Heart left ventricle (tissue), 16 donors: ENCODE measurements at regions of chr9 and their contacts with region 1.

Region 1: GRCh38 chr9:13351778-13352386 is 72.4 kb upstream of the MPDZ start:
- DNase-seq: peak in 1 of 5 donors; percentile 24
- ATAC-seq: peak in 2 of 4 donors; percentile 46 to 47
- H3K4me3 ChIP-seq: no peak overlapping the region
- H3K27ac ChIP-seq: no peak overlapping the region
- H3K4me1 ChIP-seq: no peaks in the 10 kb centered on the region
- H3K27me3 ChIP-seq: no peaks in the 10 kb centered on the region
- CTCF ChIP-seq: peak; percentile 49 to 82 (median 68)
- POLR2A ChIP-seq: no peak

Region 2: DNA sequence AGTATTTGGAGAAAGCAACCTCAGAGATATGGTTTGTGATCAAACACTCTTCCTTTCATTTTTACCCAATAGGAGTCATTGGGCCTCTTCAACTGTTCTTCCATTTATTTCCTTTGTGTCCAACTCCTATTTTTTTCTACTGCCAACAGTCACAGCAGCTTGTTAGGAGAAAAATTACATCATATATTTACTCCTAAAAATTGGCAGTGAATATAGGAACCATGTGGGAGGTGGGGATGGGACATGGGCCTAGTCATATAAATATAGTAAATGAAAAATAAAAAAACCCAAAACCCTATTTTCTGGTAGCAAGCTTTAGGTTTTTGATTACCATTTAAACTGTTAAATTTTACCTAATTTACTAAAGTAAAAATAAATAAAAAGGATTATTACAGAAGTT is 62.5 kb after region 1 on chr9:
- intact Hi-C with region 1: loop called in 1 of 10 experiments (anchors 2 kb)
- DNase-seq: no peak
- ATAC-seq: no peak
- H3K4me3 ChIP-seq: no peak overlapping the region
- H3K27ac ChIP-seq: no peak overlapping the region
- H3K4me1 ChIP-seq: peaks cover 0 to 14% (median 0%) of the 10 kb centered on the region in 12 donors
- H3K27me3 ChIP-seq: no peaks in the 10 kb centered on the region
- CTCF ChIP-seq: no peak
- POLR2A ChIP-seq: no peak

Region 3: GRCh38 chr9:14358523-14358922 is 1006.6 kb after region 1 on chr9:
- intact Hi-C with region 1: loop called in 3 of 10 experiments (anchors 5 to 10 kb)
- DNase-seq: no peak
- ATAC-seq: no peak
- H3K4me3 ChIP-seq: no peak overlapping the region
- H3K27ac ChIP-seq: no peak overlapping the region
- H3K4me1 ChIP-seq: peaks cover 0 to 27% (median 7%) of the 10 kb centered on the region in 12 donors
- H3K27me3 ChIP-seq: no peaks in the 10 kb centered on the region
- CTCF ChIP-seq: no peak
- POLR2A ChIP-seq: no peak

Region 4: GRCh38 chr9:14400658-14400995 is 1048.7 kb after region 1 on chr9:
- intact Hi-C with region 1: loop called in 5 of 10 experiments (anchors 5 to 10 kb)
- DNase-seq: peak in 4 of 5 donors; percentile 41 to 62 (median 50)
- ATAC-seq: peak; percentile 43 to 90 (median 86)
- H3K4me3 ChIP-seq: peak overlapping the region in 8 of 12 donors; percentile 8 to 38 (median 20)
- H3K27ac ChIP-seq: peak overlapping the region in 3 of 12 donors; percentile 5 to 24 (median 16)
- H3K4me1 ChIP-seq: peaks cover 0 to 22% (median 7%) of the 10 kb centered on the region in 12 donors
- H3K27me3 ChIP-seq: no peaks in the 10 kb centered on the region
- CTCF ChIP-seq: peak; percentile 12 to 78 (median 67)
- POLR2A ChIP-seq: no peak

Region 5: GRCh38 chr9:14428781-14429230 is 1076.9 kb after region 1 on chr9:
- intact Hi-C with region 1: loop called in 6 of 10 experiments (anchors 5 to 10 kb)
- DNase-seq: peak; percentile 67 to 80 (median 74)
- ATAC-seq: peak; percentile 69 to 80 (median 76)
- H3K4me3 ChIP-seq: no peak overlapping the region
- H3K27ac ChIP-seq: peak overlapping the region in 7 of 12 donors; percentile 23 to 54 (median 37)
- H3K4me1 ChIP-seq: peaks cover 0 to 40% (median 17%) of the 10 kb centered on the region in 12 donors
- H3K27me3 ChIP-seq: no peaks in the 10 kb centered on the region
- CTCF ChIP-seq: peak; percentile 69 to 86 (median 80)
- POLR2A ChIP-seq: no peak

Region 6: DNA sequence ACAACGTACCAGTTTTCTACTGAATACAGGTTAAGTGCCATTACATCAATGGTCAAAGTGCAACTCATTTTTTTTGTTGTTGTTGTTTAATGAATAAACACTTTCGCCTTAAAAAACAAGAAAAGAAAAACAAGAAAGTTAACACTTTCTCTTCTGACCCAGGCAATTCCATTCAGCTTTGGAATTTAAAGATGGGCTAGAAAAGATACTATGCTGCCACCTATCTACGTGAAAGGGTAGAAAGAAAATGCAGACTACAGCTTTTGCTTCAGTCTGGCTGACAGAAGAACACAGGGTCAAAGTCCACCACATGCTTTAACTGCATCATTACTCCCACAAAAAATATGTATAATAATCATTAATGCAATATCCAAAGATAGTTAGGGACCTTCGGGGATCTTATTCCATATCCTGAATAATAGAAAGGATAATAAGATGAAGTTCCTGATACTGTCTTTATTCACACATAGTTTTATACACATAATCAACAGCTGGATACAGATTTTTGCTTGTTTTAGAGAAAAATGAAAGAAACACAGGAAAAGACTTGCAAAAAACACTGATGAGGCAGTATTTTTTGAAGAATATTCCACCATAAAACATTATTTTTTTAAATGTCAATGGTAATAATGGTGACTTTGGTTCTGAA is 1301.0 kb after region 1 on chr9:
- intact Hi-C with region 1: loop called in 1 of 10 experiments (anchors 5 kb)
- DNase-seq: no peak
- ATAC-seq: no peak
- H3K4me3 ChIP-seq: no peak overlapping the region
- H3K27ac ChIP-seq: no peak overlapping the region
- H3K4me1 ChIP-seq: no peaks in the 10 kb centered on the region
- H3K27me3 ChIP-seq: no peaks in the 10 kb centered on the region
- CTCF ChIP-seq: peak; percentile 9 to 64 (median 47)
- POLR2A ChIP-seq: no peak

Region 7: GRCh38 chr9:14768405-14769229 is 1416.7 kb after region 1 on chr9:
- intact Hi-C with region 1: loop called in 1 of 10 experiments (anchors 5 kb)
- DNase-seq: no peak
- ATAC-seq: peak in 3 of 4 donors; percentile 27 to 52 (median 42)
- H3K4me3 ChIP-seq: no peak overlapping the region
- H3K27ac ChIP-seq: no peak overlapping the region
- H3K4me1 ChIP-seq: peaks cover 0 to 4% (median 0%) of the 10 kb centered on the region in 12 donors
- H3K27me3 ChIP-seq: no peaks in the 10 kb centered on the region
- CTCF ChIP-seq: peak; percentile 64 to 83 (median 69)
- POLR2A ChIP-seq: no peak